Posterior vena cava (tissue), 2 donors: ENCODE measurements at regions of chr18 and their contacts with region 1.

Region 1: GRCh38 chr18:23416298-23416697 is 36.8 kb upstream of the RIOK3 start:
- DNase-seq: no peak

Region 2: DNA sequence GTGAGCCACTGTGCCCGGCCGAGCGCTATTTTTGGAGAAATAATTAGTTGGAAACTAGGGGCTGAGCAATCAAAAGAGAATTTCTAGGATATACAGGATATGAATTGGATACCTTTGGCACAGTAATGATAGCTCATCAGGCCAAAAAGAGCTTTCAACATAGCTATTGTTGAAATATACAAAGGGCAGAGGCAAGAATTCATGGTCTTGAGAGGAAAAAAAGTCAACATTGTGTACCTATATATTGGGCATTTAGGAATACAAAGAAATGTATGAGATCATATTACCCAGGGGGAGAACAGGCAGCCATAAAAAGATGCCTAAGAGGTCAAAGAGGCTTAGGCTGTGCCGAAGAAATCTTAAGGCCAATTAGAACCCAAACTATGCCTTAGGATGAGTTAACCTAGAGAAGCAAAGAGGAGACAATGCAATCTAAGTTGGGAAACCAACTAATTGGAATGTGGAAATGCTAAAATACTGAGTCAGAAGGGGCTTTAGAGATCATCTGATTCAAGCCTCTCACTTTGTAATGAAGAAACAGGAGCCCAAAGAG is 384.2 kb before region 1 on chr18:
- intact Hi-C with region 1: loop called in 1 of 2 experiments (anchors 10 kb)
- DNase-seq: no peak

Region 3: DNA sequence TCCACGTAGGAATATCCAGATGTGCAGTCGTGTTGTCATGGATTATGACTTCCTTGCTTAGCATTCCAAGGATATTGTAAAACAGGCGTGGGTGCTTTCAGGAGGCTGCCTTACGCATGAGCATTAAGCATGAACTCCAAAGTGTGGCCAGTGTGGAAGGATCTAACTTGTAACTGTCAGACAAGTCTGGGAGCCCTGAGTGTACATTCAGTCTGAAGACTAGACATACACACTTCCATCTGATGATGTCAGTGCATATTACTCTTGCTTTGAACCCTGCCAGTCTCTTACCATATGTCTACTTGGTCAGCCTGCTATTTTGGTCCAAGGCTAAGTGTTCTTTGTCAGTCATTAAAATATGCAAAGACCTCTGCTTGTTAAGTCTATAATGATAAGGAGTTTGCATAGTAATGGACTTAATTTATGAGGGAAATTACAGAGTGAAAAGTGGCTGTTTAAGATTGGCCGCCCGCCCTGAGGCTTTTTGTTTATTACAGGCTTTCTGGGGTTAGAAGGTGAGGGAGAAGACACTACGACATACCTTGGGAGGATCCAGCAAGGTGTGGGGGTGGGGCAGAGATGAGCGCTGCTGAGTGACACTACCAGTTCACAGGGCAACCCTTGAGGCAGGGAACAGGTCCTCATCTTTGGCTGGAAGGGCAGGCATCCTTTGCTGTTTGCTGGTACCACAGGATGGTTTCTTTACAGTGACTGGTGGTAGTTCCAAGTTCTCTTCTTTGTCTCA is 232.7 kb before region 1 on chr18:
- intact Hi-C with region 1: no loop called
- DNase-seq: no peak